Activated naive CD4-positive, alpha-beta T cell treated with anti-CD3 and anti-CD28 coated beads, Interleukin-2, amount 10 ng/mL, durations not matched to agents 7 days and 5 days (primary cell): ENCODE measurements at regions of chr3 and their contacts with region 1.

Region 1: DNA sequence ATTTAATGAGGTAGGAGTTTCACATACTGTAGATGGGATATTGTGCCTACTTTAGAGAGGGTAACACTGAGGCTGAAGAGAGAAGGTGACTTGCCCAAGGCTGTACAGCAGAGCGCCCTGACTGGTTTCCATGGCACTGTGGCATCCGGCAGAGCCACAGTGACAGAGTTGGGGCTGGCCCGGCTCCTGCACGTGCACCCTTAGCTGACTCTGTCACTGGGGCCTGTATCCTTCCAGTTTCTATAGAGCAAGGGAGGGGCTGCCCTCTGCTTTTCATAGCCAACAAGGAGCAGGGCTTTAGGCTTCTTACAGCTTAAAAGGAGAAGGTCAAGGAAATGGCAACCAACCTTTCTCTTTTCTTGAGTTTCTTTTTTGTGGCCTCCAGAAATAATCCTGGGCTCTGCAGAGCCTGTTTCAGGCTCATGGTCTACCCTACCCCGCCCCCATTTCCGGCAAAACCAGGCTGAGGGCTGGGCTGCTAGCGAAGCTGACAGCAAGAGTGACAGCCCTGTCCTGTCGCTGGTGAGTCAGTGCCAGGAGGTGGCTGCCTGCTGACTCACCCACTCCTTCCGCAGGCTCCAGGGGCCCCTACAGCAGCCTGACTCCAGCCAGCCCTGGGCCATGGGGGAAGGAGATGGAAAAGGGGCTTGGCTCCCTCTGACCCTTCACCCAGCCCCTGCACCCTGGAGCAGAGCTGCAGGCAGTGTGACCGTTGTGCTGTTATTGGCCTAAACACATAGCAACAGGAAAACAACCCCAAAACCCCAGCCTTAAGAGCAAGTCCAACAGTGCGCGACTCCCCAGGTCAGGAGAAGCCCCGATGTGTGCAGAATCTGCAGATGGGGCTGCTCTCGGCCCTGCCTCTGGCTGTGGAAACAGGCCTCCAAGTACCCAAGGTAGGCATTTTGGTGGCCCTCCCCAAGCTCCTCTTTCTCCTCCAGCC is 29.8 kb downstream of the SLC6A6 start:
- DNase-seq: peak; percentile 97
- H3K4me3 Mint-ChIP-seq: peak overlapping the region; percentile 70
- H3K27ac Mint-ChIP-seq: peak overlapping the region; percentile 98
- H3K4me1 Mint-ChIP-seq: peaks cover 82% of the 10 kb centered on the region
- H3K27me3 Mint-ChIP-seq: no peaks in the 10 kb centered on the region

Region 2: DNA sequence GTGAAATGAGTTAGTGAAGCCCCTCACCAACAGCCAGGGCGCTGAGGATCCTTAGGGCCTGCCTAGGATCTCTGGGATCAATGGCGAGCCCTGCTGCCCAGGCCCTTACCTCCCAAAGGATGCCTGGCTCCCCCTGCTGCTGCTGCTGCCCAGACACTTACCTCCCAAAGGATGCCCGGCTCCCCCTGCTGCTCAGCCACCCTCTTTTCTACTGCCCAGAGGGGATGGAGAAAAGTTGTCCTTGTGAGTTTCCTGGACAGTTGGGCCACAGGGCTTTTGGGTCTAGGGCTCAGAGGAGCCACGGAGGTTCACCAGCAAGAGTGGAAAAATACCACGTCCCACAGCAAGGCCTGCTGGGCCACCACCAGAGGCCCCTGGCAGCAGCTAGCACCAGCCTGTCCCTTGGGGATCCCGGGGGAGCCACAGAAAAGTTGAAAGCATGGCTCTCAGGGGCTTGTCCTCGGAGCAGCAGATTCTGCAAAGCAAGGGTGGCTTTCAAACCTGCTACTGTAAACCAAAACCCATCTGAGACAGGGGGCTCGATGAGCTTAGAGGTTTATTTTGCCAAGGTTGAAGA is 29.7 kb after region 1 on chr3:
- CTCF ChIA-PET with region 1: interaction called, 11 read pairs
- DNase-seq: peak; percentile 62
- H3K4me3 Mint-ChIP-seq: no peak overlapping the region
- H3K27ac Mint-ChIP-seq: peak overlapping the region; percentile 74
- H3K4me1 Mint-ChIP-seq: peaks cover 4% of the 10 kb centered on the region
- H3K27me3 Mint-ChIP-seq: no peaks in the 10 kb centered on the region

Region 3: GRCh38 chr3:14511628-14512280 is 79.6 kb after region 1 on chr3:
- CTCF ChIA-PET with region 1: no interaction called
- DNase-seq: no peak
- H3K4me3 Mint-ChIP-seq: no peak overlapping the region
- H3K27ac Mint-ChIP-seq: no peak overlapping the region
- H3K4me1 Mint-ChIP-seq: no peaks in the 10 kb centered on the region
- H3K27me3 Mint-ChIP-seq: peaks cover 16% of the 10 kb centered on the region